Transverse colon (tissue), 4 donors: ENCODE measurements at regions of chr10 and their contacts with region 1.

Region 1: GRCh38 chr10:28302638-28303488 is at the start of gene MPP7:
- DNase-seq: peak; percentile 95
- H3K4me3 ChIP-seq: peak within 1 kb of the TSS; percentile 63 to 98 (median 84)
- H3K27ac ChIP-seq: peak within 1 kb of the TSS; percentile 92 to 97 (median 96)
- H3K4me1 ChIP-seq: peaks cover 0 to 23% (median 15%) of the 10 kb centered on the region in 4 donors
- H3K27me3 ChIP-seq: peaks cover 3% of the 10 kb centered on the region
- CTCF ChIP-seq: peak; percentile 42 to 63 (median 55)
- EP300 ChIP-seq: no peak
- POLR2A ChIP-seq: peak; percentile 85
- total RNA-seq, gene MPP7: 13.1 to 44.8 (median 27.3) TPM

Region 2: DNA sequence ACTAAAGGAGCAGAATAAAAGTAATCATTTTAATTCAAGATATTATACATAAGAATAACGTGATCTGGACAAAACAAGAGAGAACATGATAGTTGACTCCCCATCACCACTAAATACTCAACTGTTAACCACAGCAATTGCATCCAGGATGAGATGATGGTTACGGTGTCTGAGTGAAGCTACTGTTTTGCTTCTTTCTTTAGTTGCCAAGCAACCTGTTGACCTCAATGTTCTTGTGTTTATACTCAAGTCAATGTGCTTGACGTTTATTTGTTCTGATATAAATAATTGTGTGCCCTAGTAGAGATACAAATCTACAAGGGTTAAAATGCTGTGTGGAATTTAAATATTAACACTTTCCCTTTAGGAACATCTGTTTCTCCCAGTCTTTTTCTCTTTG is 31.4 kb after region 1 on chr10:
- in situ Hi-C with region 1: no loop called
- intact Hi-C with region 1: loop called (anchors 2 kb)
- DNase-seq: no peak
- H3K4me3 ChIP-seq: peak overlapping the region in 3 of 4 donors; percentile 27 to 30 (median 30)
- H3K27ac ChIP-seq: peak overlapping the region; percentile 73 to 88 (median 81)
- H3K4me1 ChIP-seq: peaks cover 0 to 22% (median 3%) of the 10 kb centered on the region in 4 donors
- H3K27me3 ChIP-seq: no peaks in the 10 kb centered on the region
- CTCF ChIP-seq: no peak
- EP300 ChIP-seq: peak; percentile 25
- POLR2A ChIP-seq: peak; percentile 48

Region 3: DNA sequence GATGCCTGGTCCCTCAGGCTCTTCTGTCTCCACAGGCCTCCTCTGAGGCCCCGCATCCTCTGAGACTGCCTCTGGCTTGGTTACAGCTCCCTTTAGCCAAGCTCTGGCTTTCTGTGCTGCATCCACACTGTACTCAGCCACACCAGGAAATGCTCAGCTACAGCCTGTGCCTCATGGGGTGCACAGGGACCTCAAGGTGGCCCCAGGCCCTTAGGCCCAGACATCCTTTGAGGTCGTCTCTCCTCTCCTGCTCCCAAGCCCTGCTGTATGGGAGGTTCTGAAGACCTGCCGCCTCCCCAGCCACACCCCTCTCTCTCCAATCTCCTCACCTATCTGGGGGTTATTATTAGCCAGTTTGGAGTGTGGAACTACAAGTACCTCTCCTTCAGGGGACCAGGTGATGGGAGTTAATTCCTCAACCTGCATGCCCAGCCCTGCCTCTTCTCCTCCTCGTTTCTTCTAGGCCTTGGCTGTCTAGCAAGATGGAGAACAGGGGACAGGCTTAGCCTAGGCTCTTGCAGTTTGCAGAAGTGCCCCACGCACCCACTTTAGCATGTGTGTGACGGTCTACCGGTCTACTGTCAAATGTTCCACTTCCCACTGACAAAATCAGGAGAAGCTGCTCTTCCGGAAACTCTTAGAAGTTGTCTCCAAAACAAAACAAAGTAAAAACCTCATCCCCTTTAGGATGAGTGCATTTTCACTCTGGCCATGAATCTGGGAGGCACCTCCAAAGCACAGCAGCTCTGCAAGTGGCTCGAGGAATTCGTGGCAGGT is 166.0 kb after region 1 on chr10:
- in situ Hi-C with region 1: no loop called
- intact Hi-C with region 1: no loop called
- DNase-seq: no peak
- H3K4me3 ChIP-seq: no peak overlapping the region
- H3K27ac ChIP-seq: no peak overlapping the region
- H3K4me1 ChIP-seq: no peaks in the 10 kb centered on the region
- H3K27me3 ChIP-seq: no peaks in the 10 kb centered on the region
- CTCF ChIP-seq: no peak
- EP300 ChIP-seq: no peak
- POLR2A ChIP-seq: no peak